ENCODE measurements at regions of chr1 and their contacts with region 1.

Region 1: DNA sequence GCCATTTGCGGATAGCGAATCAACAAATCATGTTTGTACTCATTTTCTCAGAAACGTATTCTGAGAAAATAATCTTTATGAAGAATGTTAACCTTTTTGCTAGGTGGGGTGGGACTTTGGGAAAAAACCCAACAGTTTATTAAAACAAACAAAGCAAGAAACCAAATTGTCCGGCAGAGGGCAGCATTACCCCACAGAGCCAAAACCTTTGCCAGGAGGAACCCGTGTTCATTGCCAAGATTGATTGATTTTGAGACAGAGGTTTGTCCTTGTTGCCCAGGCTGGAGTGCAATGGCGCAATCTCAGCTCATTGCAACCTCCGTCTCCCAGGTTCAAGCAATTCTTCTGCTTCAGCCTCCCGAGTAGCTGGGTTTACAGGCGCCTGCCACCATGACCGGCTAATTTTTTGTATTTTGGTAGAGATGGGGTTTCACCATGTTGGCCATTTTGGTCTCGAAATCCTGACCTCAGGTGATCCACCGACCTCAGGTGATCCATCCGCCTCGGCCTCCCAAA is 70.8 kb upstream of the RHOU start:
- DNase-seq: peak; percentile 83
- H3K4me3 ChIP-seq: no peak overlapping the region
- H3K27ac ChIP-seq: no peak overlapping the region
- H3K4me1 ChIP-seq: no peaks in the 10 kb centered on the region
- H3K27me3 ChIP-seq: no peaks in the 10 kb centered on the region
- CTCF ChIP-seq: peak; percentile 76

Region 2: DNA sequence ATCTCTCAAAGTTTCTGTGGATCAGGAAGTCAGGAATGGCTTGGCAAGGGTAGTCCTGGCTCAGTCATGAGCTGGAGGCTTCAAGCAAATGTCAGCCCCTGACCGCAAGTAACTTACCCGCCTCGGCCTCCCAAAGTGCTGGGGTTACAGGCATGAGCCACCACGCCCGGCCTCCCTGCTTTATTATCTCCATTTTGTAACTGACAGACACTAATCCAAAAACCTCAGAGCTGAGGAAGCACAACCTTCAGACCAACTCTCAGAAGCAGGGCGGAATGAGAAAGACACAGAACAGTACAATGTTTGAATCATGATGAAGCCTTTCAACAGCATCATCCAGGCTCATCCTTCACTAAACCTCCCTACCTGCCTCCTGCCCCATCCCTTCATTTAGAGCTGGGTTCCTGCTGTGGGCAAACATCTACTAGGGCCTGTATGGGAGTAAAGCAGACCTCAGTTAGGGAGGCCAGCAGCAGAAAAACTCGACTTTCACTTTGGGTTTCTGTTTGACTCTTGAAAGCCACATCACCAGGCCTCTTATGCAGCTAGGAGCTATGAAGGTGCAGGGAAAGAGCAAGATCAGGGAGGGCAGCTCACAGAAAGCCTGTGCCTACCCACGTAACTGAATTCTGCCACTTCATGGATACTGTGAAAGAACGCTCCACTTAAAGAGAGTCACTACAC is 522.1 kb after region 1 on chr1:
- CTCF ChIA-PET with region 1: no interaction called
- POLR2A ChIA-PET with region 1: interaction called, 13 read pairs
- intact Hi-C with region 1: no loop called
- DNase-seq: no peak
- H3K4me3 ChIP-seq: no peak overlapping the region
- H3K27ac ChIP-seq: no peak overlapping the region
- H3K4me1 ChIP-seq: no peaks in the 10 kb centered on the region
- H3K27me3 ChIP-seq: no peaks in the 10 kb centered on the region
- CTCF ChIP-seq: no peak

Region 3: DNA sequence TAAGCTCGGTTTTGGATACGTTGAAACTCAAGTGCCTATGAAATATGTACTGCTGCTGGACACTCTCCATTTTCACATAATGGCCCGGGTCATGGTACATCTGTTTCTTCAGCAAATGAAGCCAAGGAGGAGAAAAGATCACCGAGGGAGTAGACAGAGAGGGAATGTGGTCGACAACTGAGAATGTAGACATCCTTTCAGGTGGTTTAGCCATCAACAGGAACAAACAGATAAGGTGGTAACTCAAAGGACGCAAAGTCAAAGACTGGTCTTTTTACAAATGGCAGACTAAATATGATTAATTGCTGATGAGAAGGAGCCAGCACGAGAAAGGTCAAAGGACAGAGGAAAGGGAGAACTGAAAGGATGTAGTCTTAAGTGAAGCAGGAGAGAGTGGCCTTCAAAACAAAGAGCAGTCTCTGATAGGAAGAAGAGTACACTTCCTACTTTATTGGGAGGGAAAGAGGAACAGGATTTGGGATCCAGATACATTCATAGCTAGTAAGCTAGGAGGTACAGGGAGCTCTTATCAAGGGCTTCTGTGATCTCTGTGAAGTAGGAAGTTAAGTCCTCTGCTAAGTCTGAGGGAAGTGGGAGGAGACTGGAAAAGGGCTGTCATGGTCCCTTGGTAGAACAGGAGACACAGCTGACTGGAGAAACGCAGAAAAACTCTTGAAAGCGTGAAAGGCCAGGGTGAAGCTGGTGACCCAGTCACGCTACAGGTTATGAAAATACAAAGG is 815.4 kb after region 1 on chr1:
- CTCF ChIA-PET with region 1: interaction called, 3 read pairs
- POLR2A ChIA-PET with region 1: no interaction called
- intact Hi-C with region 1: loop called (anchors 1 kb)
- DNase-seq: no peak
- H3K4me3 ChIP-seq: no peak overlapping the region
- H3K27ac ChIP-seq: no peak overlapping the region
- H3K4me1 ChIP-seq: no peaks in the 10 kb centered on the region
- H3K27me3 ChIP-seq: no peaks in the 10 kb centered on the region
- CTCF ChIP-seq: no peak

Measured in A673 (cell line).